CD8-positive, alpha-beta T cell (primary cell): ENCODE measurements at regions of chr3 and their contacts with region 1.

Region 1: GRCh38 chr3:53219895-53220483 is 35.8 kb downstream of the TKT start:
- DNase-seq: peak; percentile 52 to 85 (median 76)
- ATAC-seq: peak; percentile 93
- H3K4me3 ChIP-seq: no peak overlapping the region
- H3K4me3 Mint-ChIP-seq: no peak overlapping the region
- H3K27ac ChIP-seq: no peak overlapping the region
- H3K27ac Mint-ChIP-seq: no peak overlapping the region
- H3K4me1 ChIP-seq: no peaks in the 10 kb centered on the region
- H3K4me1 Mint-ChIP-seq: peaks cover 3% of the 10 kb centered on the region
- H3K27me3 ChIP-seq: no peaks in the 10 kb centered on the region
- H3K27me3 Mint-ChIP-seq: no peaks in the 10 kb centered on the region
- CTCF ChIP-seq: peak; percentile 92

Region 2: DNA sequence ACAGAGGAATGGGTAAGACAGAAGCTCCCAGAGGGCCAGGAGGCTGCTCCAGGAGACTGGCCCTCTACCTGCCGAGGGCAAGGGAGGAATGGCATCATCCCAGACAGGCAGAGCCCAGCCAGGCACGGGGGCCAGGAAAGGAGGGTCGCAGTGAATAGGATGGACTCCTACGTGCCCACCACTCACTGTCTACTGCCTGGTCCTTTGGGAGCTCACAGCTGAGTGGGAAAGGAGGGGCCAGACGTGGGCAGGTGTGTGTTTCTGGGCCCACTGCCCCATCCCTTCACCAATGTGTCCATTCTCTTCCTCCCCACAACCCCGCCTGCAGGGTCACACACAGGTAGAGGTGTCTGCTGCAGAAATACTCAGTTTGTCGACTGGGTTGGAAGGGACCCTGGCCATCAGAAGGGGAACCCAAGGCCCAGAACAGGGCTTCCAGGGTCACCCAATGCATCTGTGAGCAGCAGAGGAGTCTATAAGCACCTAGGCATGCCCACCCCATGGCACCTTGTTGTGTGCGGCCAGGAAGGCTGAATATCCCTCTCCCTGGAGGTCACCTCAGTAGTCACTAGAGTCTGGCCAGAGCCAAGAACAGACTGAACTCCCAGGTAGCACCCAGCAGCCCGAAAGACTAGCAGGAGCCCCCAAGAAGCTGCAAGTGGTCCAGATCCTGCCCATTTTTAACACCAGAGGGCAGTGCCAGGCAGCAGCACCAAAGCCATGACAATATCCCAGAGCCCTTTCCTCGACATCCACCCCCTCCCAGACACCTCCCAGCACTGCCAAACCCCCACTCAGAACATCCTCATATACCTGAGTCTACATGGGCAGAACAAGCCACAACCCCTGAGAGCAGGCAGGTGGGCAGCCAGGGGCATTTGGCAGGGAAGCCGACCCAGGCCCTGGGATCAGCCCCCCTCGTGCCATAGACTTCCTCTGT is 11.9 kb after region 1 on chr3:
- CTCF ChIA-PET with region 1: interaction called, 23 read pairs
- POLR2A ChIA-PET with region 1: interaction called, 3 read pairs
- intact Hi-C with region 1: no loop called
- DNase-seq: no peak
- ATAC-seq: no peak
- H3K4me3 ChIP-seq: no peak overlapping the region
- H3K4me3 Mint-ChIP-seq: no peak overlapping the region
- H3K27ac ChIP-seq: no peak overlapping the region
- H3K27ac Mint-ChIP-seq: peak overlapping the region; percentile 10
- H3K4me1 ChIP-seq: no peaks in the 10 kb centered on the region
- H3K4me1 Mint-ChIP-seq: peaks cover 3% of the 10 kb centered on the region
- H3K27me3 ChIP-seq: no peaks in the 10 kb centered on the region
- H3K27me3 Mint-ChIP-seq: no peaks in the 10 kb centered on the region
- CTCF ChIP-seq: no peak